ENCODE measurements at regions of chr7 and their contacts with region 1.

Region 1: DNA sequence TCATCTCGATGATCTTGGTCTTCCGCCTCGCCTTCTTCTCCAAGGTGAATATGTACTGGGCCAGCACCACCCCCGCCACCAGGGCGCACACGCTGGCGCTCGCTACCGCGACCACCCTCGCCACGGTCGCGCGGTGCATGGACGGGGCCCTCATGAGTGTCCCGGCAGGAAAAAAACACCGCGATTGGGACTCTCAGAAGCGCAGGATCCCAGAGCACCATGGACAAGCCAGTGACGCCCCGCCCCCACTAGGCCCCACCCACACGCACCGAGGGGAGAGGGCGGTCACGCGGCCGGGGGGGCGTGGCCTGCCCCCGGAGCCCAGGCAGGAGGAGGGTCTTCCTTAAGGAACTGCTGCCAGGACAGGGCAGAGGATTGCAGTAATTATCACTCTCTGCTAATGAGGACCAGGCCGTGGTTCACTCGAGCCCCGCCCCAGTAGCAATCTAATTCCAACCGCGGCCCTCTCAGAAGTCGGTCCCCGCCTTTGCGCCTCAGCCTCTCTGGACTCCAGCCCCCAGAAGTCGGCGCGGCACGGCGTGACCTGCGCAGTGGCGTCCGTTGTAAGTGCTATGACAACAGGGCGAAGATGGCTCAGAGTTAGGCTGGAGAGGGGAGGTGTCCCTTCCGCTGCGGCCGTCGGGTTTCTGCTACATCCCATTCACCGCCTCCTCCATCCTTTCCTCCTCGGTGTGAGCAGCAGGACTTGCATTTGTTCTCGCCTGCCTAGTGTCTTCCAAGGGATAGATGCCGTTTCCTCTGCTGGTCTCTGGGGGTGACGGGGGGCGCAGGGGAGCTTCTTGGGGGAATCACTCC is at the start of gene BBS9:
- DNase-seq: peak; percentile 95
- H3K4me3 Mint-ChIP-seq: peak within 1 kb of the TSS; percentile 93
- H3K27ac Mint-ChIP-seq: peak within 1 kb of the TSS; percentile 72
- H3K4me1 Mint-ChIP-seq: peaks cover 21% of the 10 kb centered on the region
- H3K27me3 Mint-ChIP-seq: no peaks in the 10 kb centered on the region
- total RNA-seq, gene BBS9: 7.0 to 7.4 TPM

Region 2: DNA sequence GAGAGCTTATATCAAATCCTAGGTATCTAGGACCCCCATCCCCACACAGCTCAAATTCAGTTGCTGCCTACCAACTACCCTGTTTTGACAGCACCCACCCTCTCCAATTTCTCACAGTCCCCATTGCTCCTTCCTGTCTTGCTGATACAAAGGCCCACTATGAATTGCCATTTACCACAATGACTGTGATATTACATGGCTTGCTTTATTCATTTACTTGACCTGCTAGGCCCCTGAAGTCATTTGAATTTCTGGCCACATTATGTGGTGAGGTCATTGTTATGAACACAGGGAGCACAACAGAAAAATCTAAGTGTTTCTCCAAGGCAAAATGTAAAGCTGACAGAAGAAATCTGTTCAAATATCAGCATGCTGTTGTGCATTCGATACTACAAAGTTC is 1340.8 kb before region 1 on chr7:
- CTCF ChIA-PET with region 1: no interaction called
- intact Hi-C with region 1: no loop called
- DNase-seq: no peak
- H3K4me3 Mint-ChIP-seq: no peak overlapping the region
- H3K27ac Mint-ChIP-seq: no peak overlapping the region
- H3K4me1 Mint-ChIP-seq: no peaks in the 10 kb centered on the region
- H3K27me3 Mint-ChIP-seq: no peaks in the 10 kb centered on the region

Region 3: DNA sequence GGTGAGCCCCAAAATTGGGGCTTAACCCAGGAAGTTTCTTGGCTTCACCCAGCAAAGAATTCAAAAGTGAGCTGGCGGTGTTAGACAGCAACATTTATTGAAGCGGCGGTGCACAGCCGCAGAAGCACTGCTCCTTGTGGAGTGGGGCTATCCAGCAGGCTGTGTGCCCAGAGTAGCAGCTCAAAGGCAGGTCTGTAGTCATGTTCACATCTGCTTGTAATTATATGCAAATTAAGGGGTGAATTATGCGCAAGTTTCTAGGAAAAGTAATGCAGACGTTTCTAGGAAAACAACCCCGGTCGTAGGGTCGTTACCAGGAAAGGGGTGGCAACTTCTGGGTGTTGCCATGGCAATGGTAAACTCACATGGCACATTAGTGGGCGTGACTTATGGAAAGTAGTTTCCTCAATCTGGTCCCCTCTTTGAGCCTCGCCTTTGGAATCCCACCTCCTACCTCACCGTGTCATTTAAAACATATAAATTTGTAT is 224.0 kb before region 1 on chr7:
- CTCF ChIA-PET with region 1: no interaction called
- intact Hi-C with region 1: loop called (anchors 1 kb)
- DNase-seq: peak; percentile 88
- H3K4me3 Mint-ChIP-seq: peak overlapping the region; percentile 70
- H3K27ac Mint-ChIP-seq: peak overlapping the region; percentile 87
- H3K4me1 Mint-ChIP-seq: peaks cover 18% of the 10 kb centered on the region
- H3K27me3 Mint-ChIP-seq: no peaks in the 10 kb centered on the region

Region 4: GRCh38 chr7:33040803-33041516 is 88.2 kb before region 1 on chr7:
- CTCF ChIA-PET with region 1: no interaction called
- intact Hi-C with region 1: loop called (anchors 1 kb)
- DNase-seq: peak; percentile 84
- H3K4me3 Mint-ChIP-seq: peak overlapping the region; percentile 69
- H3K27ac Mint-ChIP-seq: peak overlapping the region; percentile 86
- H3K4me1 Mint-ChIP-seq: peaks cover 47% of the 10 kb centered on the region
- H3K27me3 Mint-ChIP-seq: no peaks in the 10 kb centered on the region

Region 5: GRCh38 chr7:33079763-33080725 is 49.2 kb before region 1 on chr7:
- CTCF ChIA-PET with region 1: no interaction called
- intact Hi-C with region 1: no loop called
- DNase-seq: no peak
- H3K4me3 Mint-ChIP-seq: no peak overlapping the region
- H3K27ac Mint-ChIP-seq: no peak overlapping the region
- H3K4me1 Mint-ChIP-seq: peaks cover 12% of the 10 kb centered on the region
- H3K27me3 Mint-ChIP-seq: no peaks in the 10 kb centered on the region

Region 6: GRCh38 chr7:33300131-33300530 is 170.9 kb after region 1 on chr7:
- CTCF ChIA-PET with region 1: no interaction called
- intact Hi-C with region 1: no loop called
- DNase-seq: no peak
- H3K4me3 Mint-ChIP-seq: no peak overlapping the region
- H3K27ac Mint-ChIP-seq: no peak overlapping the region
- H3K4me1 Mint-ChIP-seq: no peaks in the 10 kb centered on the region
- H3K27me3 Mint-ChIP-seq: no peaks in the 10 kb centered on the region

Measured in activated naive CD4-positive, alpha-beta T cell treated with anti-CD3 and anti-CD28 coated beads for 36 hours (primary cell).